ENCODE measurements at regions of chr1 and their contacts with region 1.

Region 1: GRCh38 chr1:109630081-109630897 is 10.7 kb downstream of the AMPD2 start:
- DNase-seq: peak; percentile 67
- ATAC-seq: peak; percentile 23
- H3K4me3 Mint-ChIP-seq: no peak overlapping the region
- H3K27ac Mint-ChIP-seq: peak overlapping the region; percentile 57; the same call in 1 of the 2 replicates
- H3K4me1 Mint-ChIP-seq: peaks cover 17% of the 10 kb centered on the region
- H3K27me3 Mint-ChIP-seq: no peaks in the 10 kb centered on the region
- CTCF ChIP-seq: peak; percentile 56; the same call in 1 of the 2 replicates

Region 2: DNA sequence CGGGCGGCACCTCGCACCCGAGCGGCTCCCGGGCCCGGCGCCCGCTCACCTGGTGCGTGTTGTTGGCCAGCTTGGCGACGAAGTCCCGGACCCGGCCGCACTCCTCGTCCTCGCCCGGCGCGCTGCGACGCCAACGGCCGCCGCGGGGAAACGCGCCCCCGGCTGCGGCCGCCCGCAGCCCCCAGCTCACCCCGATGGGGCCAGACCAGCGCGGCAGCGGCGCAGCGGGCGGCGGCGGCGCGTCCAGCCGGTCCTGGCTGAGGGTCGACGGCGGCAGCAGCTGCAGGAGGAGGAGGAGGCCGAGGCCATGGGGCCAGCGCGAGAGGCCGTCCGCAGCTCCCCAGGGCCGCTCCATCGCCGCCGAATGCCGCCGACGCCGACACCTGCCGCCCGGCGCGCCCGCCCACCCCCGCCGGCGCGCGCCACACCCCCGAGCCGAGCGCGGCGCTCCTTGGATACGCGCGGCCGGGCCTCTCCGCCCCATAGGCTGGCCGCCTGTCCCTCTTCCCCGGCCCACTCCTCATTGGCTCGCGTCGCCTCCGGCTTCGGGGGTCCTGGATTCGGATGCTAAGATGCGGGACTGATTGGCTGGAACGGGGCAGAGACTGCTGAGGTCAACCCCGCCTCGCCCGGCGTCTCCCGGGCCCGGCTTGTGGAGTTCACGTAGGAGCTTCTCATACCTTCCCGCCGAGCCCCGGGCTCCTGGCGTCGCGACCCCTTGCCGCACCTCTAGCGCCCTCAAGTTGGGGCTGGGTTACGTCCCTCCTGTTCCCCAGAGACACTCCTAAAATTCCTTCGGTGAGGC is 232.5 kb before region 1 on chr1 and contains the start of gene SORT1:
- CTCF ChIA-PET with region 1: no interaction called
- POLR2A ChIA-PET with region 1: no interaction called
- DNase-seq: peak; percentile 97
- ATAC-seq: peak; percentile 99
- H3K4me3 Mint-ChIP-seq: peak within 1 kb of the TSS; percentile 95
- H3K27ac Mint-ChIP-seq: peak within 1 kb of the TSS; percentile 97
- H3K4me1 Mint-ChIP-seq: peaks cover 43% of the 10 kb centered on the region
- H3K27me3 Mint-ChIP-seq: no peaks in the 10 kb centered on the region
- CTCF ChIP-seq: no peak
- total RNA-seq, gene SORT1: 50.2 to 60.8 TPM (median 55.9 TPM) in 3 replicates

Region 3: GRCh38 chr1:109564194-109564878 is 66.0 kb before region 1 on chr1:
- CTCF ChIA-PET with region 1: interaction called, 11 read pairs
- POLR2A ChIA-PET with region 1: interaction called, 3 read pairs
- DNase-seq: no peak
- ATAC-seq: peak; percentile 43
- H3K4me3 Mint-ChIP-seq: peak overlapping the region; percentile 46
- H3K27ac Mint-ChIP-seq: peak overlapping the region; percentile 94
- H3K4me1 Mint-ChIP-seq: peaks cover 51% of the 10 kb centered on the region
- H3K27me3 Mint-ChIP-seq: no peaks in the 10 kb centered on the region
- CTCF ChIP-seq: no peak

Region 4: DNA sequence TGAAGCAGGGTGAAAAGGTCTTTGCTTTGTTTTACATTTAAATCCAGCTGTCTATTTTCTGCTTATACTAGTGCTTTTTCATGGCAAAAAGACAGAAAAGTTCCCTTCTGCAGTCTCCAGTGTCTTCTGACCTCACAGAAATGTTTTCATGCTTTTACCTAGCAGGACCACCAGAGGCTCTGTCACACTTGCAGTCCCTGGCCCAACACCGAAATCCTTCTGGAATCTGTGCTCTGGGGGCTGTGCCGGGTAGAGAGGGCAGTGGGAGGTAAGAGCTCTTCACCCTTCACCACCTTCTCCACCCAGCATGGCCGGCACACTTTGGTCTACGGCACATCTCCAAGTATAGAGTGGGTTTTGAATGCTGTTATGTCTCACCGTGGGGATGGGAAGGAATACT is 31.6 kb before region 1 on chr1:
- CTCF ChIA-PET with region 1: interaction called, 39 read pairs
- POLR2A ChIA-PET with region 1: no interaction called
- DNase-seq: peak; percentile 58
- ATAC-seq: peak; percentile 98
- H3K4me3 Mint-ChIP-seq: no peak overlapping the region
- H3K27ac Mint-ChIP-seq: peak overlapping the region; percentile 61; the same call in 1 of the 2 replicates
- H3K4me1 Mint-ChIP-seq: 0 out of 2 replicates have a peak, but pooled peaks cover 3% of the 10 kb centered on the region
- H3K27me3 Mint-ChIP-seq: no peaks in the 10 kb centered on the region
- CTCF ChIP-seq: no peak

Region 5: DNA sequence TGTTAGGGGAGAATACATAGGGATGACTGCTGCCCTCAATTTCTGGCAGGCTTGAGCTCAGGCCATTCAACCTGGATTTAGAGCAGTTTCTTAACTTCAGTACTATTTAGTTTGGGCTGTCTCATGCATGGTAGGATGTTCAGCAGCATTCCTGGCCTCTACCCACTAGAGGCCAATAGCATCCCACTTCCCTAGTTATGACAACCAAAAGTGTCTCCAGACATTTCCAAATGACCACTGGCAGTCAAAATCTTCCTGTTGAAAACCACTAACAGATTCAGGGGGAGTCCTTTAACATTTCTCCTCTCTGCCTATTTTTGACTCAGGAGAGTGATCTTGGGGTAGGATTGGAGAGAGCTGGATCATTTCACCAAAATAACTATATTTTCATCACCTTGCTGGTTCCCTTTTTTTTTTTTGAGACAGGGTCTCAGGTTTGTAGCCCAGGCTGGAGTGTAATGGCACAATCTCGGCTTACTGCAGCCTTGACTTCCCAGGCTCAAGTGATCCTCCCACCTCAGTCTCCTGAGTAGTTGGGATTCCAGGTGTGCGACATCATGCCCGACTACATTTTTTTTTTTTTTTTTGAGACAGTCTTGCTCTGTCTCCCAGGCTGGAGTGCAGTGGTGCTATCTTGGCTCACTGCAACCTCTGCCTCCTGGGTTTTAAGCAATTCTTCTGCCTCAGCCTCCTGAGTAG is 19.5 kb before region 1 on chr1:
- CTCF ChIA-PET with region 1: interaction called, 24 read pairs
- POLR2A ChIA-PET with region 1: no interaction called
- DNase-seq: no peak
- ATAC-seq: peak; percentile 46; the same call in 1 of the 2 replicates
- H3K4me3 Mint-ChIP-seq: no peak overlapping the region
- H3K27ac Mint-ChIP-seq: no peak overlapping the region
- H3K4me1 Mint-ChIP-seq: peaks cover 27% of the 10 kb centered on the region
- H3K27me3 Mint-ChIP-seq: no peaks in the 10 kb centered on the region
- CTCF ChIP-seq: no peak

Region 6: GRCh38 chr1:109655601-109656519 is 25.6 kb after region 1 on chr1 and contains the start of gene GSTM4:
- CTCF ChIA-PET with region 1: interaction called, 19 read pairs
- POLR2A ChIA-PET with region 1: no interaction called
- DNase-seq: peak; percentile 87
- ATAC-seq: peak; percentile 97
- H3K4me3 Mint-ChIP-seq: peak within 1 kb of the TSS; percentile 91
- H3K27ac Mint-ChIP-seq: peak within 1 kb of the TSS; percentile 93
- H3K4me1 Mint-ChIP-seq: peaks cover 12% of the 10 kb centered on the region
- H3K27me3 Mint-ChIP-seq: peaks cover 36% of the 10 kb centered on the region
- CTCF ChIP-seq: no peak
- total RNA-seq, gene GSTM4: 16.4 to 18.1 TPM (median 16.7 TPM) in 3 replicates

Region 7: GRCh38 chr1:109677459-109677858 is 47.2 kb after region 1 on chr1:
- CTCF ChIA-PET with region 1: no interaction called
- POLR2A ChIA-PET with region 1: no interaction called
- DNase-seq: no peak
- ATAC-seq: no peak
- H3K4me3 Mint-ChIP-seq: no peak overlapping the region
- H3K27ac Mint-ChIP-seq: no peak overlapping the region
- H3K4me1 Mint-ChIP-seq: no peaks in the 10 kb centered on the region
- H3K27me3 Mint-ChIP-seq: no peaks in the 10 kb centered on the region
- CTCF ChIP-seq: no peak

Region 8: GRCh38 chr1:109687616-109688499 is 57.6 kb after region 1 on chr1 and contains the start of gene GSTM1:
- CTCF ChIA-PET with region 1: no interaction called
- POLR2A ChIA-PET with region 1: no interaction called
- DNase-seq: no peak
- ATAC-seq: no peak
- H3K4me3 Mint-ChIP-seq: no peak within 1 kb of the TSS
- H3K27ac Mint-ChIP-seq: no peak within 1 kb of the TSS
- H3K4me1 Mint-ChIP-seq: no peaks in the 10 kb centered on the region
- H3K27me3 Mint-ChIP-seq: no peaks in the 10 kb centered on the region
- CTCF ChIP-seq: no peak
- total RNA-seq, gene GSTM1: not detected in 3 replicates

Measured in WTC11 (cell line).